HepG2 (cell line): ENCODE measurements at regions of chr4 and their contacts with region 1.

Region 1: DNA sequence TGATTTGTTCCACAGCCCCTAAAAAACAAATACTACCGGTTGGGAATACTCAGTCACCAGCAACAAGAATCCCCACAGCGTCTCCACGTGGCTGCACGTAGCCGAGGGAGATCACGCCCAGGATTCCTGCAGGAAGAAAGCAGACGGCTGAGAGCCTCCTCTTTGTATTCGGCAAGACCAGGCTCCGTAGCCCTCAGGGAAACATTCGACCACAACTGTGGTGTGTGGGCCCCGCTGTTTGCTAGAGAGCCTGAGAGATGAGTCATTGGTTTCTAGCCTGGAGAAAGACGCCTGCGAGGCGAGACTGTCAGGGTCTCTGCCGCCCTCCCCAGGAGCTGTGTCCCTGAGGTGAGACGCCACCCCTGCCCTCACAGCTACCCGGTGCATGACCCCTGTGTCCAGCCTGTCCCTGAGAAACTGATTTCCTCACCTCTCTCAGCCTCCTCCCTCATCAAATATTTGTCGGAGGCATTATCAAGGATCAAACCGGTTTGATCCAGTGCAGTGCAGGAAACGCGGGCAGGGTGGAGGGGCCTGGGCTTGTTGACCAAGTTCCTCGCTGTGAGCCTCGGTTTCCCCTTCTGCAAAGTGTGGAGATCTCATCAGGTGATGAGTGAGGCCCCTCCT is 4.7 kb upstream of the S100P start:
- DNase-seq: peak; percentile 91
- ATAC-seq: peak; percentile 62
- H3K4me3 ChIP-seq: peak overlapping the region; percentile 49 to 74 (median 66); a peak in 5 of 6 replicates
- H3K27ac ChIP-seq: peak overlapping the region; percentile 94
- H3K4me1 ChIP-seq: peaks cover 75% of the 10 kb centered on the region
- H3K27me3 ChIP-seq: no peaks in the 10 kb centered on the region; a peak in 1 of 5 replicates
- CTCF ChIP-seq: peak; percentile 44
- EP300 ChIP-seq: peak in 1 of 2 experiments; percentile 53; a peak in 1 of 4 replicates
- POLR2A ChIP-seq: peak in 1 of 2 experiments; percentile 32; a peak in 2 of 4 replicates
- RAD21 ChIP-seq: no peak

Region 2: GRCh38 chr4:6574747-6575502 is 114.1 kb before region 1 on chr4 and contains the start of gene MAN2B2:
- CTCF ChIA-PET with region 1: no interaction called
- POLR2A ChIA-PET with region 1: interaction called, 10 read pairs
- in situ Hi-C with region 1: no loop called
- intact Hi-C with region 1: no loop called
- DNase-seq: peak; percentile 66
- ATAC-seq: peak; percentile 95
- H3K4me3 ChIP-seq: peak within 1 kb of the TSS; percentile 87 to 98 (median 88)
- H3K27ac ChIP-seq: peak within 1 kb of the TSS; percentile 30
- H3K4me1 ChIP-seq: peaks cover 21% of the 10 kb centered on the region
- H3K27me3 ChIP-seq: peaks cover 2 to 27% of the 10 kb centered on the region in 2 experiments; a peak in 3 of 5 replicates
- CTCF ChIP-seq: no peak
- EP300 ChIP-seq: no peak
- POLR2A ChIP-seq: peak; percentile 79 to 81
- RAD21 ChIP-seq: peak; percentile 22; the same call in 1 of the 2 replicates
- total RNA-seq, gene MAN2B2: 2.8 and 5.4 TPM in 2 replicates

Region 3: GRCh38 chr4:6608758-6609414 is 80.1 kb before region 1 on chr4:
- CTCF ChIA-PET with region 1: no interaction called
- POLR2A ChIA-PET with region 1: no interaction called
- in situ Hi-C with region 1: no loop called
- intact Hi-C with region 1: no loop called
- DNase-seq: no peak
- ATAC-seq: peak; percentile 65
- H3K4me3 ChIP-seq: no peak overlapping the region
- H3K27ac ChIP-seq: no peak overlapping the region
- H3K4me1 ChIP-seq: no peaks in the 10 kb centered on the region
- H3K27me3 ChIP-seq: no peaks in the 10 kb centered on the region
- CTCF ChIP-seq: no peak
- EP300 ChIP-seq: no peak
- POLR2A ChIP-seq: no peak
- RAD21 ChIP-seq: no peak

Region 4: DNA sequence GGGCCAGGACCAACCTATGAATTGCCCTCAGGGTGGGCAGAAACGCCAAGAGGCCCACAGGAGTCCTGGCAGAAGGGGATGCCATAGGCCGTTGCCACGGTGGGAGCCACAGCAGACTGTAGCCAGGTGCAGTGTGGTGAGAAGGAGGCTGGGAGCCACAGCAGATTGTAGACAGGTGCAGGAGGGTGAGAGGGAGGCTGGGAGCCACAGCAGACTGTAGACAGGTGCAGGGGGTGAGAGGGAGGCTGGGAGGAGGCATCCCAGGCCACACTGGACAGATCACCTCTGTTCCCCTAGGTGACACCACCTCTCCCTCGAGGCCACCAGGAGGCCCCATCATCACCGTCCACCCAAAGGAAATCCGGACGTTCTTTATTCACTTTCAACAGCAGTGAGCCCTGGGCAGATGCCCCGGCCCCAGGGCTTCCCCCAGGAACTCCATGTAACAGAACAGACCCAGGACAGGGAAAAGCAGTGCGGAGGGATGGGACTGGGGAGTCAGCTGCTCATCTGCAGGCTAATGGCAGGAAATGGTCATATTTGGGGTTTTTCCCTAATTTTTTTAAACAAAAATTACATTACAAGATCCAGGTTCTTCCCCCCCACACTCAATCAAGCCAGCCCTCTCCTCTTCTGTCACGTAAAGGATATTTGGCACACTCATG is 68.0 kb before region 1 on chr4:
- CTCF ChIA-PET with region 1: interaction called, 3 read pairs
- POLR2A ChIA-PET with region 1: no interaction called
- in situ Hi-C with region 1: no loop called
- intact Hi-C with region 1: loop called (anchors 10 kb)
- DNase-seq: peak; percentile 20
- ATAC-seq: peak; percentile 81
- H3K4me3 ChIP-seq: no peak overlapping the region
- H3K27ac ChIP-seq: no peak overlapping the region
- H3K4me1 ChIP-seq: peaks cover 9% of the 10 kb centered on the region
- H3K27me3 ChIP-seq: no peaks in the 10 kb centered on the region; a peak in 1 of 5 replicates
- CTCF ChIP-seq: peak; percentile 46
- EP300 ChIP-seq: no peak
- POLR2A ChIP-seq: no peak
- RAD21 ChIP-seq: no peak

Region 5: GRCh38 chr4:6633041-6633906 is 55.7 kb before region 1 on chr4:
- CTCF ChIA-PET with region 1: no interaction called
- POLR2A ChIA-PET with region 1: interaction called, 13 read pairs
- in situ Hi-C with region 1: no loop called
- intact Hi-C with region 1: loop called (anchors 10 kb)
- DNase-seq: peak; percentile 82
- ATAC-seq: peak; percentile 99
- H3K4me3 ChIP-seq: peak overlapping the region; percentile 20 to 65 (median 49); a peak in 5 of 6 replicates
- H3K27ac ChIP-seq: peak overlapping the region; percentile 83
- H3K4me1 ChIP-seq: peaks cover 28% of the 10 kb centered on the region
- H3K27me3 ChIP-seq: no peaks in the 10 kb centered on the region
- CTCF ChIP-seq: peak; percentile 23; the same call in 1 of the 2 replicates
- EP300 ChIP-seq: peak in 1 of 2 experiments; percentile 33; a peak in 1 of 4 replicates
- POLR2A ChIP-seq: peak; percentile 76 to 85
- RAD21 ChIP-seq: no peak

Region 6: GRCh38 chr4:6640292-6641163 is 48.5 kb before region 1 on chr4 and contains the start of gene MRFAP1:
- CTCF ChIA-PET with region 1: no interaction called
- POLR2A ChIA-PET with region 1: interaction called, 24 read pairs
- in situ Hi-C with region 1: no loop called
- intact Hi-C with region 1: loop called (anchors 5 kb)
- DNase-seq: peak; percentile 86
- ATAC-seq: peak; percentile 91
- H3K4me3 ChIP-seq: peak within 1 kb of the TSS; percentile 67 to 91 (median 74)
- H3K27ac ChIP-seq: peak within 1 kb of the TSS; percentile 84
- H3K4me1 ChIP-seq: peaks cover 38% of the 10 kb centered on the region
- H3K27me3 ChIP-seq: no peaks in the 10 kb centered on the region; a peak in 1 of 5 replicates
- CTCF ChIP-seq: no peak
- EP300 ChIP-seq: no peak; a peak in 1 of 4 replicates
- POLR2A ChIP-seq: peak; percentile 83 to 94
- RAD21 ChIP-seq: no peak
- total RNA-seq, gene MRFAP1: 158 and 254 TPM in 2 replicates

Region 7: DNA sequence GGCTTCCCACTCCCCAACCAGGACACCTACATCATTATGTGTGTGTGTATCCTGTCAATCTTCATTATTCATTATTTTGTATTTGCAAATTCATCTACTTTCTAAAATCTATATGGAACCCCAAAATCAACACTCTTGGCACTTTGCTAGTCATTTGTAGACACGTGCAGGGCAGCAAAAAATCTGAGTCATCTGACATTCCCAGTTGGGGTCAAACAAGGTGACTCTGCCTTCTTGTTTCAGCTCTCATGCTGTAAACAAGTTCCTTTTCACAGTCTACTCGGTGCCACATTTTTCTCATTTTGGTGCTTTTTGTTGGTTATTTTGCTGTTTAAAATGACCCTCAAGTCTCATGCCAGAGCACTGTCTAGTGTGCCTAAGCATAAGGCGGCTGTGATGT is 14.8 kb after region 1 on chr4:
- CTCF ChIA-PET with region 1: no interaction called
- POLR2A ChIA-PET with region 1: interaction called, 40 read pairs
- in situ Hi-C with region 1: no loop called
- intact Hi-C with region 1: no loop called
- DNase-seq: peak; percentile 43
- ATAC-seq: no peak
- H3K4me3 ChIP-seq: no peak overlapping the region
- H3K27ac ChIP-seq: peak overlapping the region; percentile 23
- H3K4me1 ChIP-seq: peaks cover 64% of the 10 kb centered on the region
- H3K27me3 ChIP-seq: no peaks in the 10 kb centered on the region; a peak in 1 of 5 replicates
- CTCF ChIP-seq: no peak
- EP300 ChIP-seq: no peak
- POLR2A ChIP-seq: no peak
- RAD21 ChIP-seq: no peak

Region 8: DNA sequence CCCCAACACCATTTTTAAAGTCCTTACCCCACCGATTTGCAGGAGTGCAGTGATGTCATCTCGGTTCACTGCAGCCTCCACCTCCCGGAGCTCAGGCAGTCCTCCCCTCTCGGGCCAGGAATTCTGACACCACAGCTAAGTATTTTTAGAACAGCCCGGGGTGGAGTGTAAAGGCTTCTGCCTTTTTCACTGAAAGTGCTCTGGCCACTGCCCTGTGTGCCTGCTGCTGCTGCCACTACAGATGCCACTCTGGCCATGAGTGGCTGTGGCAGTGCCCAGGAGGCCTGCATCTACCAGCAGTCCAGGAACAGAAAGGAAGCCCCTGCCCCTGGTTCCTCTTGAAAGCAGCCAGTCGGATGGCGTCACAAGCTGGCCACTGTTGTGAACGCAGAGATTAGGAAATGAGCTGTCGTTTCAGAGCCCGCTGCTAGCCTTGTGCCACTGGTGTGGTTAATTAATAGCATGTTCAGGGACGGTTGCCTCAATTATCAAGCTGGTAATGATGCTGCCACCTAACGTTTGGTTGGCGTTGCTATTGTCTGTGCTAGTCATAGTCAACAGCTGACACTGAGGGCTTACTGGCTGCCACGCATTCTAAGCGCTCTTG is 197.1 kb after region 1 on chr4:
- CTCF ChIA-PET with region 1: no interaction called
- POLR2A ChIA-PET with region 1: no interaction called
- in situ Hi-C with region 1: no loop called
- intact Hi-C with region 1: no loop called
- DNase-seq: no peak
- ATAC-seq: no peak
- H3K4me3 ChIP-seq: no peak overlapping the region
- H3K27ac ChIP-seq: no peak overlapping the region
- H3K4me1 ChIP-seq: peaks cover under 1% of the 10 kb centered on the region; the same call in 1 of the 2 replicates
- H3K27me3 ChIP-seq: no peaks in the 10 kb centered on the region
- CTCF ChIP-seq: no peak
- EP300 ChIP-seq: no peak
- POLR2A ChIP-seq: no peak
- RAD21 ChIP-seq: no peak

Region 9: GRCh38 chr4:6963139-6963611 is 274.2 kb after region 1 on chr4:
- CTCF ChIA-PET with region 1: no interaction called
- POLR2A ChIA-PET with region 1: no interaction called
- in situ Hi-C with region 1: no loop called
- intact Hi-C with region 1: no loop called
- DNase-seq: peak; percentile 48
- ATAC-seq: peak; percentile 93
- H3K4me3 ChIP-seq: no peak overlapping the region; a peak in 1 of 6 replicates
- H3K27ac ChIP-seq: no peak overlapping the region
- H3K4me1 ChIP-seq: peaks cover 47% of the 10 kb centered on the region
- H3K27me3 ChIP-seq: no peaks in the 10 kb centered on the region
- CTCF ChIP-seq: no peak
- EP300 ChIP-seq: no peak
- POLR2A ChIP-seq: no peak
- RAD21 ChIP-seq: no peak